Naive thymus-derived CD4-positive, alpha-beta T cell (primary cell): ENCODE measurements at regions of chr3 and their contacts with region 1.

Region 1: GRCh38 chr3:32947789-32948238 is 3.6 kb upstream of the CCR4 start:
- DNase-seq: peak; percentile 71 to 87 (median 82)
- ATAC-seq: peak; percentile 90
- H3K4me3 ChIP-seq: no peak overlapping the region
- H3K4me3 Mint-ChIP-seq: no peak overlapping the region
- H3K27ac ChIP-seq: no peak overlapping the region
- H3K27ac Mint-ChIP-seq: peak overlapping the region in 1 of 9 donors; percentile 74
- H3K4me1 ChIP-seq: peaks cover 9 to 13% of the 10 kb centered on the region in 2 donors
- H3K4me1 Mint-ChIP-seq: peaks cover 8 to 45% (median 24%) of the 10 kb centered on the region in 7 donors
- H3K27me3 ChIP-seq: no peaks in the 10 kb centered on the region
- H3K27me3 Mint-ChIP-seq: peaks cover 0 to 4% (median 0%) of the 10 kb centered on the region in 5 donors

Region 2: DNA sequence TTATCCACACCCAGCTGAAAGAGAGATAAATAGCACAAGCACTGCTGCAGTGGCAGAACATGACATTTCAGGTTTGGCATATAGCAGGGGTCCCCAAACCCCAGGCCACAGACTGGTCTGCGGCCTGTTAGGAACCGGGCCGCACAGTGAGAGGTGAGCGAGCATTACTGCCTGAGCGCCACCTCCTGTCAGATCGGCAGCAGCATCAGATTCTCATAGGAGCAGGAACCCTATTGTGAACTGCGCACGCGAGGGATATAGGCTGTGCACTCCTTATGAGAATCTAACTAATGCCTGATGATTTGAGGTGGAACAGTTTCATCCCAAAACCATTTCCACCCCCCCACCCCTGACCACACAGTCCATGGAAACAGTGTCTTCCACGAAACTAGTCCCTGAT is 58.3 kb after region 1 on chr3:
- CTCF ChIA-PET with region 1: interaction called, 3 read pairs
- POLR2A ChIA-PET with region 1: no interaction called
- intact Hi-C with region 1: loop called in 1 of 2 experiments (anchors 5 kb)
- DNase-seq: no peak
- ATAC-seq: no peak
- H3K4me3 ChIP-seq: no peak overlapping the region
- H3K4me3 Mint-ChIP-seq: no peak overlapping the region
- H3K27ac ChIP-seq: no peak overlapping the region
- H3K27ac Mint-ChIP-seq: peak overlapping the region in 1 of 9 donors; percentile 3
- H3K4me1 ChIP-seq: peaks cover 14 to 17% of the 10 kb centered on the region in 2 donors
- H3K4me1 Mint-ChIP-seq: peaks cover 16 to 34% (median 24%) of the 10 kb centered on the region in 7 donors
- H3K27me3 ChIP-seq: no peaks in the 10 kb centered on the region
- H3K27me3 Mint-ChIP-seq: no peaks in the 10 kb centered on the region

Region 3: GRCh38 chr3:33047842-33048834 is 100.3 kb after region 1 on chr3:
- CTCF ChIA-PET with region 1: interaction called, 4 read pairs
- POLR2A ChIA-PET with region 1: interaction called, 3 read pairs
- intact Hi-C with region 1: loop called in 1 of 2 experiments (anchors 1 kb)
- DNase-seq: peak in 8 of 9 donors; percentile 50 to 89 (median 84)
- ATAC-seq: peak; percentile 91
- H3K4me3 ChIP-seq: peak overlapping the region; percentile 28
- H3K4me3 Mint-ChIP-seq: peak overlapping the region; percentile 65 to 90 (median 82)
- H3K27ac ChIP-seq: no peak overlapping the region
- H3K27ac Mint-ChIP-seq: peak overlapping the region; percentile 58 to 98 (median 79)
- H3K4me1 ChIP-seq: peaks cover 60 to 82% of the 10 kb centered on the region in 2 donors
- H3K4me1 Mint-ChIP-seq: peaks cover 53 to 78% (median 69%) of the 10 kb centered on the region in 7 donors
- H3K27me3 ChIP-seq: no peaks in the 10 kb centered on the region
- H3K27me3 Mint-ChIP-seq: no peaks in the 10 kb centered on the region

Region 4: GRCh38 chr3:33131331-33132018 is 183.7 kb after region 1 on chr3:
- CTCF ChIA-PET with region 1: no interaction called
- POLR2A ChIA-PET with region 1: no interaction called
- intact Hi-C with region 1: loop called (anchors 1 kb)
- DNase-seq: peak in 6 of 9 donors; percentile 5 to 46 (median 37)
- ATAC-seq: peak; percentile 80
- H3K4me3 ChIP-seq: no peak overlapping the region
- H3K4me3 Mint-ChIP-seq: no peak overlapping the region
- H3K27ac ChIP-seq: no peak overlapping the region
- H3K27ac Mint-ChIP-seq: no peak overlapping the region
- H3K4me1 ChIP-seq: no peaks in the 10 kb centered on the region
- H3K4me1 Mint-ChIP-seq: peaks cover 2 to 12% (median 11%) of the 10 kb centered on the region in 7 donors
- H3K27me3 ChIP-seq: no peaks in the 10 kb centered on the region
- H3K27me3 Mint-ChIP-seq: no peaks in the 10 kb centered on the region

Region 5: DNA sequence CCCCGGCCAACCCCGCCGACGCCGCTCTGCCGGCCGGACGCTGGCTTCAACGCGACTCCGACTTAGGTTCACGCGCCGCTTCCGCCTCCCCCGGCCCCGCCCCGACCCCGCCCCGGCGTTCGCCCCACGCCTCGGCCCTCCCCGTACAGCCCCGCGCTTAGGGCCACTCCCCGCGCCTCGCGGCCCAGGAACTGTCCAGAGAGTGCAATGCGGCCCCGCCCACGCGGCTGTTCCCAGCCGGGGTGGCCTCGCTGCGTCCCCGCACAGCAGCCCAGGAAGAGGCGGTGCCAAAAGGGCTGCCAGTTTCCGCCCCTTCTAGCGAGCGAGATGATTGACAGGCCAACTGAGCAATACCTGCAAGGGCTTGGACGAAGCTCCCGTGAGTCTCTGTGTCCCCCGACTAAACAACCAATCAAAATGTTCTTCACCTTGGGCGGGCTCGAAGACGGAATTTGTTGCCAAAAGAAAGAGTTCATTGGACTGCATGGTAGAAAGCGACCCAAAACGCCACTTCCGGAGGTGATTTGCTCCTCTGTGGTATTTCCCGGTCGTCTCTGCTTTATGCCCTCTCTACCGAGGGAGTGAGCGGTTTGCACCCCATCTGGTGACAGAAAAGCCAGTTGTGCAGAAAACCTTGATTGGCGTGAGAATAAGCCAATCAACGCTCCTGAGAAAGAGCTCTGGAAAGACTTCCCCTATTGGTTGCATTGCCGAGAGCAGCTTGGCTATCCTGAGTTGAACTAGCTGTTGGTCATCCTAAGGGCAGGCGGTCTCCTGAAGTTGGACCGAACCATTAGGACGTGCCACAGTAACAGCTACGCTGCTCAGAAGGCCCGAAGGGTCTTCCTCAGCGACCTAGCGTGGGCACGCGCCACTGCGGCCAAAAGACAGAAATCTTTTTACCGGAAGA is 492.8 kb after region 1 on chr3 and contains the start of gene UBP1:
- CTCF ChIA-PET with region 1: interaction called, 4 read pairs
- POLR2A ChIA-PET with region 1: no interaction called
- intact Hi-C with region 1: loop called in 1 of 2 experiments (anchors 2 kb)
- DNase-seq: peak; percentile 90 to 99 (median 97)
- ATAC-seq: peak; percentile 91
- H3K4me3 ChIP-seq: peak within 1 kb of the TSS; percentile 82
- H3K4me3 Mint-ChIP-seq: peak within 1 kb of the TSS; percentile 93 to 100 (median 100)
- H3K27ac ChIP-seq: peak within 1 kb of the TSS; percentile 91
- H3K27ac Mint-ChIP-seq: peak within 1 kb of the TSS; percentile 99 to 100 (median 100)
- H3K4me1 ChIP-seq: peaks cover 30 to 35% of the 10 kb centered on the region in 2 donors
- H3K4me1 Mint-ChIP-seq: peaks cover 28 to 56% (median 53%) of the 10 kb centered on the region in 7 donors
- H3K27me3 ChIP-seq: no peaks in the 10 kb centered on the region
- H3K27me3 Mint-ChIP-seq: no peaks in the 10 kb centered on the region
- total RNA-seq, gene UBP1: 61.4 to 116 (median 86.0) TPM

Region 6: GRCh38 chr3:33474895-33475294 is 527.1 kb after region 1 on chr3:
- CTCF ChIA-PET with region 1: no interaction called
- POLR2A ChIA-PET with region 1: no interaction called
- intact Hi-C with region 1: no loop called
- DNase-seq: no peak
- ATAC-seq: no peak
- H3K4me3 ChIP-seq: no peak overlapping the region
- H3K4me3 Mint-ChIP-seq: no peak overlapping the region
- H3K27ac ChIP-seq: no peak overlapping the region
- H3K27ac Mint-ChIP-seq: no peak overlapping the region
- H3K4me1 ChIP-seq: no peaks in the 10 kb centered on the region
- H3K4me1 Mint-ChIP-seq: peaks cover 0 to 5% (median 0%) of the 10 kb centered on the region in 7 donors
- H3K27me3 ChIP-seq: no peaks in the 10 kb centered on the region
- H3K27me3 Mint-ChIP-seq: no peaks in the 10 kb centered on the region

Region 7: DNA sequence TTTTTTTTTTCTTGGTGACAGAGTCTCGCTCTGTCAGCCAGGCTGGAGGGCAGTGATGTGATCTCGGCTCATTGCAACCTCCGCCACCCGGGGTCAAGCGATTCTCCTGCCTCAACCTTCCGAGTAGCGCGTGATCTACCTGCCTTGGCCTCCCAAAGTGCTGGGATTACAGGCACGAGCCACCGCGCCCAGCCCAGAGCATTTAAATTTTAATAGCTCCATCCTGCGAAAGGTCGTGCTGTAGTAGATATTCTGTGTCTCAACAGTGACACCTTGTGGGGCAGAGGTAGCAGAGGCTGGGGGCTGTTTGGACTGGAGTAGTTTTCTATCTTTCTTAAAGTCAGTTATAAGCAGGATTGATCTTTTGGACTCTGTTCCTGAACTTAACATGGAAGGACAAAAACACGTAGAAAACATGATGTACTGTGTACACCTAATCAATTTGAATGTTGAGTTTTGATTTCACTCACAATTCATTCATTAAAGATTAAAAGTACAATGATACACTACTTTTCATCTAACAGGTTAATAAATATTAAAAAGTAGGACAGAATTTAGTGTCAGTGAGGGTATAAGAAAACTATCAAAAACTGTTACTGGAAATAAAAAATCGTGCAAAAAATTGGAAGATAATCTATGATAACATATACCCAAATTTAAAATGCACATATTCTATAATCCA is 839.7 kb after region 1 on chr3:
- CTCF ChIA-PET with region 1: interaction called, 3 read pairs
- POLR2A ChIA-PET with region 1: no interaction called
- intact Hi-C with region 1: loop called (anchors 1 to 5 kb)
- DNase-seq: peak; percentile 16 to 71 (median 58)
- ATAC-seq: peak; percentile 83
- H3K4me3 ChIP-seq: no peak overlapping the region
- H3K4me3 Mint-ChIP-seq: peak overlapping the region in 7 of 10 donors; percentile 46 to 73 (median 62)
- H3K27ac ChIP-seq: no peak overlapping the region
- H3K27ac Mint-ChIP-seq: no peak overlapping the region
- H3K4me1 ChIP-seq: no peaks in the 10 kb centered on the region
- H3K4me1 Mint-ChIP-seq: peaks cover 0 to 9% (median 0%) of the 10 kb centered on the region in 7 donors
- H3K27me3 ChIP-seq: no peaks in the 10 kb centered on the region
- H3K27me3 Mint-ChIP-seq: peaks cover 5 to 24% (median 10%) of the 10 kb centered on the region in 5 donors